ENCODE measurements at regions of chr5 and their contacts with region 1.

Region 1: GRCh38 chr5:217860-218456 is at the starts of genes CCDC127 and SDHA:
- DNase-seq: peak; percentile 86 to 100
- H3K4me3 ChIP-seq: peak within 1 kb of the TSS; percentile 79
- H3K27ac ChIP-seq: no peak within 1 kb of the TSS
- H3K4me1 ChIP-seq: peaks cover 21% of the 10 kb centered on the region
- H3K27me3 ChIP-seq: no peaks in the 10 kb centered on the region
- CTCF ChIP-seq: peak; percentile 67
- total RNA-seq, gene CCDC127: 24.1 and 31.1 TPM in 2 replicates
- total RNA-seq, gene SDHA: 347 and 443 TPM in 2 replicates

Region 2: GRCh38 chr5:188488-189481 is 29.2 kb before region 1 on chr5:
- CTCF ChIA-PET with region 1: interaction called, 6 read pairs
- POLR2A ChIA-PET with region 1: no interaction called
- intact Hi-C with region 1: loop called (anchors 2 kb)
- DNase-seq: peak; percentile 76 to 98
- H3K4me3 ChIP-seq: no peak overlapping the region
- H3K27ac ChIP-seq: no peak overlapping the region
- H3K4me1 ChIP-seq: no peaks in the 10 kb centered on the region
- H3K27me3 ChIP-seq: peaks cover 76% of the 10 kb centered on the region
- CTCF ChIP-seq: peak; percentile 100

Region 3: DNA sequence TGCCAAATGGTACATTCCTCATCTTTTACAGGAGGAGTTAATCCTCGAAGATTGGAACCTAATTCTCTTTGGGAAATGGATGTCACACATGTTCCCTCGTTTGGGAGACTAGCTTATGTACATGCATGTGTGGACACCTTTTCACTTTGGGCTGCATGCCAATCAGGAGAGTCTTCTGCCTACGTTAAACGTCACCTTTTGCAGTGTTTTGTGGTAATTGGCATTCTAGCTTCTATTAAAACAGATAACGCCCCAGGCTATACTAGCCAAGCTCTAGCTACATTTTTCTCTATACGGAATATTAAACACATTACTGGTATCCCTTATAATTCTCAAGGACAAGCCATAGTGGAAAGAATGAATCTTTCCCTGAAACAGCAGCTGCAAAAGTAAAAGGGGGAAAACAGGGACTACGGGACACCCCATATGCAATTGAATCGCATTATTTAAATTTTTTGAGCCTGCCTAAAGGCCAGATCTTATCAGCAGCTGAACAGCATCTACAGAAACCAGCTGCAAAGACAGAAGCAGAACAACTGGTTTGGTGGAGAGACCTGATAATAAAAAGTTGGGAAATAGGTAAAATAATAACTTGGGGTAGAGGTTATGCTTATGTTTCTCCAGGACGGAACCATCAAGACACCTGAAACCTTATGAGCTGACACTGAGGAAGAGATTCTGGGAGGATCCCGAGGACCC is 29.7 kb after region 1 on chr5:
- CTCF ChIA-PET with region 1: no interaction called
- POLR2A ChIA-PET with region 1: interaction called, 11 read pairs
- intact Hi-C with region 1: no loop called
- DNase-seq: peak in 1 of 2 experiments; percentile 34
- H3K4me3 ChIP-seq: no peak overlapping the region
- H3K27ac ChIP-seq: no peak overlapping the region
- H3K4me1 ChIP-seq: no peaks in the 10 kb centered on the region
- H3K27me3 ChIP-seq: no peaks in the 10 kb centered on the region
- CTCF ChIP-seq: no peak

Region 4: GRCh38 chr5:270340-270739 is 52.4 kb after region 1 on chr5:
- CTCF ChIA-PET with region 1: no interaction called
- POLR2A ChIA-PET with region 1: interaction called, 26 read pairs
- intact Hi-C with region 1: loop called (anchors 1 kb)
- DNase-seq: no peak
- H3K4me3 ChIP-seq: peak overlapping the region; percentile 60; the same call in 1 of the 2 replicates
- H3K27ac ChIP-seq: peak overlapping the region; percentile 64
- H3K4me1 ChIP-seq: peaks cover 19% of the 10 kb centered on the region
- H3K27me3 ChIP-seq: no peaks in the 10 kb centered on the region
- CTCF ChIP-seq: no peak

Region 5: GRCh38 chr5:343461-344401 is 125.8 kb after region 1 on chr5:
- CTCF ChIA-PET with region 1: interaction called, 11 read pairs
- POLR2A ChIA-PET with region 1: no interaction called
- intact Hi-C with region 1: no loop called
- DNase-seq: peak in 1 of 2 experiments; percentile 69
- H3K4me3 ChIP-seq: no peak overlapping the region
- H3K27ac ChIP-seq: no peak overlapping the region
- H3K4me1 ChIP-seq: no peaks in the 10 kb centered on the region
- H3K27me3 ChIP-seq: no peaks in the 10 kb centered on the region
- CTCF ChIP-seq: no peak

Region 6: GRCh38 chr5:418681-419121 is 200.7 kb after region 1 on chr5:
- CTCF ChIA-PET with region 1: no interaction called
- POLR2A ChIA-PET with region 1: interaction called, 10 read pairs
- intact Hi-C with region 1: no loop called
- DNase-seq: no peak
- H3K4me3 ChIP-seq: no peak overlapping the region
- H3K27ac ChIP-seq: no peak overlapping the region
- H3K4me1 ChIP-seq: no peaks in the 10 kb centered on the region
- H3K27me3 ChIP-seq: no peaks in the 10 kb centered on the region
- CTCF ChIP-seq: no peak

Region 7: DNA sequence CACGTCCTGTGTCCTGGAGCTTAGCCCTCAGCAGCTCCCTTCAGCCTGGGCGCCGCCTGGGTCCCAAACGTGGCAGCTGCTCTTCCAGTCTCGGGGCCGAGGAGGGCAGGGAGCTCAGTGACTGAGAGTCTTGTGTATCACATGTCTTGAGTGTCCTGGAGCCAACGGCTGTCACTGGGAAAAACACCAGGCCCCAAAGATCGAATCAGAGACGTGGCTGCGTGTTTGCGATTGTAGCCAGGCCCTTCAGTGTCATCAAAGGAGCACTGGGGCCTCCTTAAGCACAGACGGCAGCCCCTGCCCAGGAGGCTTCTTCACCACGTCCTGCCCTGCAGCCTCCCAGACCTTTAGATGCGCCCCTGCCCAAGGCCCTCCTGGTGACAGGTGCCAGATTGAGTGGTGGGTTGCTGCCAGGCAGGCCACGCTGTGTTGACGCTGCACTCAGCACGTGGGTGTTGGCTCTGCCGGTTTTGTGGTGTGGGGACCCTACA is 219.4 kb after region 1 on chr5:
- CTCF ChIA-PET with region 1: interaction called, 13 read pairs
- POLR2A ChIA-PET with region 1: no interaction called
- intact Hi-C with region 1: no loop called
- DNase-seq: no peak
- H3K4me3 ChIP-seq: no peak overlapping the region
- H3K27ac ChIP-seq: no peak overlapping the region
- H3K4me1 ChIP-seq: peaks cover 7% of the 10 kb centered on the region
- H3K27me3 ChIP-seq: no peaks in the 10 kb centered on the region
- CTCF ChIP-seq: no peak

Measured in PC-9 (cell line).